Ascending aorta (tissue), 2 donors: ENCODE measurements at regions of chr14 and their contacts with region 1.

Region 1: GRCh38 chr14:23154964-23155587 is 28.4 kb downstream of the SLC7A8 start:
- DNase-seq: peak; percentile 70 to 95
- H3K4me3 ChIP-seq: peak overlapping the region; percentile 35 to 43
- H3K27ac ChIP-seq: peak overlapping the region; percentile 89 to 93
- H3K4me1 ChIP-seq: peaks cover 3 to 42% of the 10 kb centered on the region in 2 donors
- H3K27me3 ChIP-seq: no peaks in the 10 kb centered on the region
- CTCF ChIP-seq: no peak

Region 2: GRCh38 chr14:21882226-21882625 is 1272.8 kb before region 1 on chr14:
- intact Hi-C with region 1: no loop called
- DNase-seq: no peak
- H3K4me3 ChIP-seq: no peak overlapping the region
- H3K27ac ChIP-seq: no peak overlapping the region
- H3K4me1 ChIP-seq: no peaks in the 10 kb centered on the region
- H3K27me3 ChIP-seq: no peaks in the 10 kb centered on the region
- CTCF ChIP-seq: no peak

Region 3: DNA sequence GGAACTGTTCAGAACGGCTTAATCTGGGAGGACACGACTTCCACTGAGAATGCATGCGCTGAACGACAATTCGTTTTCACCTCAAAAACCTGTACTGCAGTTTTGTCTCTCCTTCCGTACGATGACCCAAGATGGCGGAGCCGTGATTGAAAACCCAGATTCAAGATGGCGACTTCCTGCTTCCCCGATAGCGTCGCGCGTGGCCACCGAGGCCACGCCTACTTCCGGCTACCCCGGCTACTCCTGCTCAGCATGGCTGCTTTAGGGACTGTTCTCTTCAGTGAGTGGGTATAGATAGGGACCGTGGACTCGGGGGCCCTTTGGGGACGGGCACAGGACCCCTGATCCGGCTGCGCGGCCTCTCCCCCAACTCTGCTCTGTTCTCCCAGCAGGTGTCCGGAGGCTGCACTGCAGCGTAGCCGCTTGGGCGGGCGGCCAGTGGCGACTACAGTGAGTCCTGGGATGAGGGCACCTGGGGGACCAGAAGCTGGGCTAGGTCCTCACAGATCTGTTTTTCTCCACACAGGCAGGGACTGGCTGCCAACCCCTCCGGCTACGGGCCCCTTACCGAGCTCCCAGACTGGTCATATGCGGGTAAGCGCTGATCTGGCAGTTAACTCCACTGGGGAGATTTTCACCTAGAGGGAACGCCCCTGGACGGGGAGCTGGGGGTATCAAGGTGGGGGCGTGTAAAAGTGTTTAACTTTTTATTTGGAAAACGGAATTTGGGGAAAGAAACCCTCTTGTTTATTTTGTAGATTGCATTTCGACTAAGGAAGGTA is 325.2 kb before region 1 on chr14 and contains the start of gene MRPL52:
- intact Hi-C with region 1: loop called (anchors 10 kb)
- DNase-seq: peak; percentile 70 to 95
- H3K4me3 ChIP-seq: peak within 1 kb of the TSS; percentile 83 to 98
- H3K27ac ChIP-seq: peak within 1 kb of the TSS; percentile 61 to 81
- H3K4me1 ChIP-seq: peaks cover 0 to 7% of the 10 kb centered on the region in 2 donors
- H3K27me3 ChIP-seq: no peaks in the 10 kb centered on the region
- CTCF ChIP-seq: no peak
- total RNA-seq, gene MRPL52: 6.6 TPM

Region 4: DNA sequence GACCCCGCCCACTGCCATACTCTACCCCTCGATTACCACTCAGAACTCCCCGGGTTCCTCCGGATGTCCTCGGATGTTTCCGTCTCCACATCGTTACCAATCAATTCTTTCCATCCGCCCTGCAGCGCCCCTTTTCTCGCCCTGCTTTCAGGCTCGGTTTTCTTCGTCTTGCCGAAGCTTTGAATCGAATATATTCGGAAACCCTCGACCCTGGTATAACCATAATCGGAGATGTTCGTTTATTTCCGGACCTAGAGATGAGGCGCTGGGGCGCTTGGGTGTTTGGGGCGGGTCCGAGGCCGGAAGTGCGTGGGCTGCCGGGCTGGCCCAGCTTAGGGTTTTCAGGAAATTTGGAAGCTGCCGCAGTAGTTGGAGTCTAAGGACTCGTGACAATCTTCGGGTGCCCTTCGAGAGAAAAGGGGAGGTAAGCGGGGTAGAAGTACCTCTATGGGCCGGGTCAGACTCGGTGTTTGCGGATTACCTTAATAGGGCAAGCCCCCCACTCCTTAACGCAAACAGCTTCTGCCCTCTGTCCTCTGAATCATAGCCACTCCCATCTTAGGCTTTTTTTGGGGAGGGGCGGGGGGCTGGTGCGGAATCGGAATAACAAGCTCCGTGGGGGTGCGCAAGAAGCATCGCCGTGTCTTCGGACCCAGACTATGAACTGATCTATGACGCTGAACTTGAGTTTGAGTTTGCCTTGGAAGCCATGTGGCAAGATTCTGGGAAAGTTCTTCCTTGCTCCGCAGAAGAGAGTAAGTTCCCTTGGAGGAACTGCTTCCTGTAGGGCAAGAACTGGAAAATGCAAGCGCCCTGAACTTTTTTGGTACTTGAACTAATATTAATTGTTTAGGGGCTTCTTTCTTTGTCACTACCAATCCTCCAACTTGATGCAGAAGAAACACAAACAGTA is 59.6 kb before region 1 on chr14 and contains the start of gene C14orf119:
- intact Hi-C with region 1: loop called (anchors 2 kb)
- DNase-seq: peak; percentile 99 to 100
- H3K4me3 ChIP-seq: peak within 1 kb of the TSS; percentile 78 to 86
- H3K27ac ChIP-seq: peak within 1 kb of the TSS; percentile 97 to 98
- H3K4me1 ChIP-seq: peaks cover 0 to 22% of the 10 kb centered on the region in 2 donors
- H3K27me3 ChIP-seq: no peaks in the 10 kb centered on the region
- CTCF ChIP-seq: no peak
- total RNA-seq, gene C14orf119: 2.2 TPM

Region 5: DNA sequence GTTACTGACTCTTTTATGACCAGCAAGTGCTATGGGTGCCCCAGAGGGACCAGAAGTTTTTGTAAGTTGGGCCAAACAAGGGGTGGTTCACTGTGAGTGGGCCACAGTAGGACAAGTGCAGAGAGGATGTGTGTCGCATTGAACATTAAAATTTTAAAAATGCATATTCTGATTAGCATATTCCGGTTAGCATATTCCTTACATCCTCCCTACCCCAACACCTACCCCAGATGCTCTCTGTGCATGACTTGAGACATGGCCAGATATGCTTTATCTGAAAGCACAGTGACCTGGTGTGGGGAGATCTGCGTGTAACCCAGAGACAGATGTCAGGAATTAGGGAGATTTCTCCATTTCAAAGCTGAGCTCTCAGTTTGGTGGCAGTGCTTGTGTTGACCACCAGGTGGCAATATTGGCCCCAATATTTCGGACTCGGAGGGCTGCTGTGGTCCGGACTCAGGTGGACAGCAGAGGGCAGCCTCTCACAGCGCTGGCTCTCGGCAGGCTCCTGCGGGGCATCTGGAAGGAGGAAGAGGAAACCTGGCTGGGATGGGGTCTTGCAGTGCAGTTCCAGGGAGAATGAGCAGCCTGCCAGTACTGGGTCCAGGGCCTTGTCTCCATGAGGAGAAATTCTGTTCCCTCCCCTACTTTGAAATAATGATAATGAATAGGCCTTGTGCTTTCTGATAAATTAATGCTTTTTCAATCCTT is 34.4 kb before region 1 on chr14:
- intact Hi-C with region 1: loop called (anchors 1 kb)
- DNase-seq: peak; percentile 69 to 95
- H3K4me3 ChIP-seq: peak overlapping the region in 1 of 2 donors; percentile 8
- H3K27ac ChIP-seq: peak overlapping the region; percentile 53 to 63
- H3K4me1 ChIP-seq: peaks cover 6 to 24% of the 10 kb centered on the region in 2 donors
- H3K27me3 ChIP-seq: no peaks in the 10 kb centered on the region
- CTCF ChIP-seq: peak; percentile 99 to 100 (median 100)

Region 6: DNA sequence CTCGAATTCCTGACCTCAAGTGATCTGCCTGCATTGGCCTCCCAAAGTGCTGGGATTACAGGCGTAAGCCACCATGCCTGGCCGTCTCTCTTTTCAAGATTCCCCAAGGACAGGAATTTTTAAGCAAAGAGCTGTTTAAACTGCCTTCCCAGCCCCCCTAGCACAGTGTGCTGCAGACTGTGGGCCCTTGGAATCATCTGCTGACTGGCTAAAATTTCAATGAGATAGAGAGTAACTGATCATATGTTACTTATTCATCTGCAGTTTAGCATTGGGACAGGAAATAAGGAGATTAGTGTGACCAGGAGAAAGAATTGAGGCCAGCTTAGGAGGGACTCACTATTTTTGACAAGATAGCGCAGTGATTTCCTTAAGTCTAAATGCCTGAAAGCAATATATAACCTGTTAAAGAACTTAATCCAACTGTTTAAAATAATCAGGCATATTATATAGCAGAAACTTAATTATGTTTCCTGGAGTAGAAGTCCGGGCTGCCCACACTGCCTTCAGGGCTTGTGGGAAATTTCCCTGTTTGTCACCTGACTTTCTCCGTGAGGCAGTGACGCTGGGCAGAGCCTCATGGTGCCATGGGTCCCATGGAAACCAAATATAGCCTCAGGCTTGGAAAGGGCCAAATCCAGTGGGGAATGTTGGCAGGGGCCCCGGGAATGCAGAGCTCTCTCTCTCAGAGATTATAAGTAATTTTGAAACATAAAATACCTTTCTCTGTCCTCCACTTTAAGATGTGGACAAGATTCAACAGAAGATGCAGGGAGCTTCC is 13.2 kb before region 1 on chr14:
- intact Hi-C with region 1: loop called (anchors 1 kb)
- DNase-seq: peak; percentile 41 to 91
- H3K4me3 ChIP-seq: no peak overlapping the region
- H3K27ac ChIP-seq: peak overlapping the region; percentile 63 to 64
- H3K4me1 ChIP-seq: peaks cover 4 to 33% of the 10 kb centered on the region in 2 donors
- H3K27me3 ChIP-seq: no peaks in the 10 kb centered on the region
- CTCF ChIP-seq: no peak

Region 7: GRCh38 chr14:23186913-23187654 is 32.0 kb after region 1 on chr14:
- intact Hi-C with region 1: loop called (anchors 1 kb)
- DNase-seq: peak in 1 of 2 donors; percentile 77
- H3K4me3 ChIP-seq: no peak overlapping the region
- H3K27ac ChIP-seq: no peak overlapping the region
- H3K4me1 ChIP-seq: no peaks in the 10 kb centered on the region
- H3K27me3 ChIP-seq: no peaks in the 10 kb centered on the region
- CTCF ChIP-seq: peak; percentile 82 to 85 (median 85)